Naive thymus-derived CD4-positive, alpha-beta T cell (primary cell): ENCODE measurements at regions of chr12 and their contacts with region 1.

Region 1: GRCh38 chr12:44875954-44876553 is at the start of gene NELL2:
- DNase-seq: peak; percentile 21 to 71 (median 47)
- ATAC-seq: peak; percentile 81
- H3K4me3 ChIP-seq: peak within 1 kb of the TSS; percentile 58
- H3K4me3 Mint-ChIP-seq: peak within 1 kb of the TSS; percentile 91 to 100 (median 96)
- H3K27ac ChIP-seq: peak within 1 kb of the TSS; percentile 78
- H3K27ac Mint-ChIP-seq: peak within 1 kb of the TSS; percentile 82 to 95 (median 89)
- H3K4me1 ChIP-seq: peaks cover 7 to 12% of the 10 kb centered on the region in 2 donors
- H3K4me1 Mint-ChIP-seq: peaks cover 14 to 41% (median 32%) of the 10 kb centered on the region in 7 donors
- H3K27me3 ChIP-seq: no peaks in the 10 kb centered on the region
- H3K27me3 Mint-ChIP-seq: peaks cover 0 to 47% (median 23%) of the 10 kb centered on the region in 5 donors
- total RNA-seq, gene NELL2: 60.9 to 414 (median 228) TPM

Region 2: DNA sequence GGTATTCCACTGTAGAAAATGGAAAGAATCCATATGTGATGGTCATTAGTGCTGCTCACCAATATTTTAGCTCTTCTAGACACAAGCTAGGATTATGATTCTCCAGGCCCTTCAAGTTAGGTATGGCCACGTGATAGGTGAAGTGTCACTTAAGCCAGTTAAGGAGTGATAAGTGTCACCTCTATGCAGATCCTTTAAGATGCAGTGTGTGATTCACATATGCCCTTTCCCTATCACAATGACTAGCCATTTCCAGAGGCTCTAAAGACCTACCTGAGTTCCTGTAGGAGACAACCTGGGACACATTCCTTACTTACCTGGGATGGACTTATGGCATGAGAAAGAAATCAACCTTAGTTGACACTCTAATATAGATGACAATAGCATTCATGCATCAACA is 343.1 kb before region 1 on chr12:
- CTCF ChIA-PET with region 1: no interaction called
- POLR2A ChIA-PET with region 1: no interaction called
- intact Hi-C with region 1: loop called in 1 of 2 experiments (anchors 5 kb)
- DNase-seq: no peak
- ATAC-seq: no peak
- H3K4me3 ChIP-seq: no peak overlapping the region
- H3K4me3 Mint-ChIP-seq: no peak overlapping the region
- H3K27ac ChIP-seq: no peak overlapping the region
- H3K27ac Mint-ChIP-seq: peak overlapping the region in 1 of 9 donors; percentile 33
- H3K4me1 ChIP-seq: no peaks in the 10 kb centered on the region
- H3K4me1 Mint-ChIP-seq: peaks cover 0 to 4% (median 0%) of the 10 kb centered on the region in 7 donors
- H3K27me3 ChIP-seq: no peaks in the 10 kb centered on the region
- H3K27me3 Mint-ChIP-seq: no peaks in the 10 kb centered on the region

Region 3: GRCh38 chr12:44774815-44775411 is 101.1 kb before region 1 on chr12:
- CTCF ChIA-PET with region 1: interaction called, 80 read pairs
- POLR2A ChIA-PET with region 1: interaction called, 23 read pairs
- intact Hi-C with region 1: loop called (anchors 1 kb)
- DNase-seq: peak; percentile 12 to 61 (median 47)
- ATAC-seq: peak; percentile 57
- H3K4me3 ChIP-seq: no peak overlapping the region
- H3K4me3 Mint-ChIP-seq: peak overlapping the region in 1 of 10 donors; percentile 64
- H3K27ac ChIP-seq: no peak overlapping the region
- H3K27ac Mint-ChIP-seq: peak overlapping the region in 2 of 9 donors; percentile 54 to 85
- H3K4me1 ChIP-seq: no peaks in the 10 kb centered on the region
- H3K4me1 Mint-ChIP-seq: peaks cover 0 to 9% (median 4%) of the 10 kb centered on the region in 7 donors
- H3K27me3 ChIP-seq: no peaks in the 10 kb centered on the region
- H3K27me3 Mint-ChIP-seq: peaks cover 0 to 3% (median 0%) of the 10 kb centered on the region in 5 donors

Region 4: GRCh38 chr12:44812062-44812461 is 64.0 kb before region 1 on chr12:
- CTCF ChIA-PET with region 1: interaction called, 99 read pairs
- POLR2A ChIA-PET with region 1: interaction called, 24 read pairs
- intact Hi-C with region 1: loop called (anchors 1 kb)
- DNase-seq: peak in 7 of 9 donors; percentile 42 to 65 (median 60)
- ATAC-seq: peak; percentile 79
- H3K4me3 ChIP-seq: no peak overlapping the region
- H3K4me3 Mint-ChIP-seq: peak overlapping the region in 3 of 10 donors; percentile 14 to 38 (median 34)
- H3K27ac ChIP-seq: no peak overlapping the region
- H3K27ac Mint-ChIP-seq: peak overlapping the region in 6 of 9 donors; percentile 21 to 77 (median 41)
- H3K4me1 ChIP-seq: peaks cover 14 to 15% of the 10 kb centered on the region in 2 donors
- H3K4me1 Mint-ChIP-seq: peaks cover 8 to 50% (median 38%) of the 10 kb centered on the region in 7 donors
- H3K27me3 ChIP-seq: no peaks in the 10 kb centered on the region
- H3K27me3 Mint-ChIP-seq: no peaks in the 10 kb centered on the region

Region 5: DNA sequence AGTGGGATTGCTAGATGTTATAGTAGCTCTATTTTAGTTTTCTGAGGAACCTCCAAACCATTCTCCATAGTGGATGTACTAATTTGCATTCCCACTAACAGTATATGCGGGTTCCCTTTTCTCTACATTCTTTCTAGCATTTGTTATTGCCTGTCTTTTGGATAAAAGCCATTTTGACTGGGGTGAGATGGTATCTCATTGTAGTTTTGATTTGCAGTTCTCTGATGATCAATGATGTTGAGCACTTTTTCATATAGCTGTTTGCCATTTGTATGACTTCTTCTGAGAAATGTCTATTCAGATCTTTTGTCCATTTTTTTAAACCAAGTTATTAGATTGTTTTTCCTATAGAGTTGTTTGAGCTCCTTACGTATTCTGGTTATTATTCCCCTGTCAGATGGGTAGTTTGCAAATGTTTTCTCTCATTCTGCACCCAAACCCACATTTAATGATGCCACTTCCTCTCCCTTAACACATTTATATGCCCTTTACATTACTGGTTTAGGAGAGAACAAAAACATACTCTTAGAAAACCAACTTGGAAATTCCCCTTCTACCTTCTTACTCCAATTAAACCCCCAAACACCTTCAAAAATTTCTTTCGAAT is 48.1 kb before region 1 on chr12:
- CTCF ChIA-PET with region 1: interaction called, 17 read pairs
- POLR2A ChIA-PET with region 1: interaction called, 81 read pairs
- intact Hi-C with region 1: loop called in 1 of 2 experiments (anchors 1 kb)
- DNase-seq: peak in 7 of 9 donors; percentile 44 to 82 (median 72)
- ATAC-seq: peak; percentile 92
- H3K4me3 ChIP-seq: peak overlapping the region; percentile 31
- H3K4me3 Mint-ChIP-seq: peak overlapping the region; percentile 56 to 81 (median 76)
- H3K27ac ChIP-seq: peak overlapping the region; percentile 74
- H3K27ac Mint-ChIP-seq: peak overlapping the region; percentile 84 to 99 (median 92)
- H3K4me1 ChIP-seq: peaks cover 28 to 36% of the 10 kb centered on the region in 2 donors
- H3K4me1 Mint-ChIP-seq: peaks cover 13 to 85% (median 66%) of the 10 kb centered on the region in 7 donors
- H3K27me3 ChIP-seq: no peaks in the 10 kb centered on the region
- H3K27me3 Mint-ChIP-seq: no peaks in the 10 kb centered on the region

Region 6: DNA sequence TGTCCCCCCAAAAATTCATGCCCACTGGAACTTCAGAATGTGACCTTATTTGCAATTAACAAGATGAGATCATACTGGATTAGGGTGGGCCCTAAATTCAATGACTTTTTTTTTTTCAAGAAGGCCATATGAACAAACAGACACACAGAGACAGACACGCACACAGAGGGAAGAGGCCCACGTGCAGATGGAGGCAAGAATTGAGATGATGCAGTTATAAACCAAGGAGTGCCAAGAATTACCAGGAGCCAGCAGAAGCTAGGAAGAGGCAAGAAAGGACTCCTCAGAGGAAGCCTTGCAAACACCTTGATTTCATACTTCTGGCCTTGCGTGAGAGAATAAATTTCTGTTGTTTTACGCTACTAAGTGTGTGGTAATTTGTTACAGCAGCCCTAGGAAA is 33.4 kb before region 1 on chr12:
- CTCF ChIA-PET with region 1: interaction called, 23 read pairs
- POLR2A ChIA-PET with region 1: interaction called, 20 read pairs
- intact Hi-C with region 1: no loop called
- DNase-seq: no peak
- ATAC-seq: peak; percentile 41
- H3K4me3 ChIP-seq: peak overlapping the region; percentile 4
- H3K4me3 Mint-ChIP-seq: peak overlapping the region; percentile 17 to 86 (median 60)
- H3K27ac ChIP-seq: peak overlapping the region; percentile 33
- H3K27ac Mint-ChIP-seq: peak overlapping the region; percentile 65 to 98 (median 89)
- H3K4me1 ChIP-seq: peaks cover 46 to 57% of the 10 kb centered on the region in 2 donors
- H3K4me1 Mint-ChIP-seq: peaks cover 27 to 96% (median 80%) of the 10 kb centered on the region in 7 donors
- H3K27me3 ChIP-seq: no peaks in the 10 kb centered on the region
- H3K27me3 Mint-ChIP-seq: no peaks in the 10 kb centered on the region

Region 7: GRCh38 chr12:44863867-44864266 is 12.2 kb before region 1 on chr12:
- CTCF ChIA-PET with region 1: interaction called, 5 read pairs
- POLR2A ChIA-PET with region 1: interaction called, 17 read pairs
- intact Hi-C with region 1: loop called in 1 of 2 experiments (anchors 1 kb)
- DNase-seq: peak in 6 of 9 donors; percentile 40 to 79 (median 68)
- ATAC-seq: peak; percentile 89
- H3K4me3 ChIP-seq: no peak overlapping the region
- H3K4me3 Mint-ChIP-seq: peak overlapping the region in 9 of 10 donors; percentile 2 to 62 (median 50)
- H3K27ac ChIP-seq: no peak overlapping the region
- H3K27ac Mint-ChIP-seq: peak overlapping the region; percentile 3 to 98 (median 76)
- H3K4me1 ChIP-seq: peaks cover 7 to 34% of the 10 kb centered on the region in 2 donors
- H3K4me1 Mint-ChIP-seq: peaks cover 7 to 78% (median 35%) of the 10 kb centered on the region in 7 donors
- H3K27me3 ChIP-seq: no peaks in the 10 kb centered on the region
- H3K27me3 Mint-ChIP-seq: no peaks in the 10 kb centered on the region

Region 8: DNA sequence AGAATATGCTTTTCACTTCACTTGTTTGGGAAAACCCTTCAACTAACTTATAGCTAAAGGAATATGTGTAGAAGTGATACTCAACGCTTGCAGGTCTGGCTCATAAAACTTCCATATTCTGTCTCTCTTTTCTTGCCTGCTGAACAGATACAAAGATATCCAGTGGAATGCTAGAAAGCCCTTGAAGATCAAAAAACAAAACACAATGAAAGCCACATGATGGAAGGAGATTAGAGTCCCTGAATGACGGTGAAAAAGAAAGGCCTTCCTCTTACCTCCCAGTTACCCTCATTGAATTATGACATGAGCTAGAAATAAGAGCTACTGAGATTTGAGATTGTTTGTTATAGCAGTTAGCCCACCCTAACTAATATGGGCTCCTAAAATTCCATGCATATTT is 28.3 kb after region 1 on chr12:
- CTCF ChIA-PET with region 1: no interaction called
- POLR2A ChIA-PET with region 1: no interaction called
- intact Hi-C with region 1: no loop called
- DNase-seq: no peak
- ATAC-seq: no peak
- H3K4me3 ChIP-seq: no peak overlapping the region
- H3K4me3 Mint-ChIP-seq: no peak overlapping the region
- H3K27ac ChIP-seq: no peak overlapping the region
- H3K27ac Mint-ChIP-seq: no peak overlapping the region
- H3K4me1 ChIP-seq: no peaks in the 10 kb centered on the region
- H3K4me1 Mint-ChIP-seq: no peaks in the 10 kb centered on the region
- H3K27me3 ChIP-seq: no peaks in the 10 kb centered on the region
- H3K27me3 Mint-ChIP-seq: peaks cover 0 to 6% (median 0%) of the 10 kb centered on the region in 5 donors